Activated T-helper 2 cell treated with anti-CD3 and anti-CD28 coated beads, Interferon-gamma antibody, Interleukin-2, Interleukin-4, amounts not matched to agents 10 μg/mL and 5 μg/mL and 100 μg/mL, durations not matched to agents 14 hours and 24 hours and 36 hours (primary cell): ENCODE measurements at regions of chr14 and their contacts with region 1.

Region 1: DNA sequence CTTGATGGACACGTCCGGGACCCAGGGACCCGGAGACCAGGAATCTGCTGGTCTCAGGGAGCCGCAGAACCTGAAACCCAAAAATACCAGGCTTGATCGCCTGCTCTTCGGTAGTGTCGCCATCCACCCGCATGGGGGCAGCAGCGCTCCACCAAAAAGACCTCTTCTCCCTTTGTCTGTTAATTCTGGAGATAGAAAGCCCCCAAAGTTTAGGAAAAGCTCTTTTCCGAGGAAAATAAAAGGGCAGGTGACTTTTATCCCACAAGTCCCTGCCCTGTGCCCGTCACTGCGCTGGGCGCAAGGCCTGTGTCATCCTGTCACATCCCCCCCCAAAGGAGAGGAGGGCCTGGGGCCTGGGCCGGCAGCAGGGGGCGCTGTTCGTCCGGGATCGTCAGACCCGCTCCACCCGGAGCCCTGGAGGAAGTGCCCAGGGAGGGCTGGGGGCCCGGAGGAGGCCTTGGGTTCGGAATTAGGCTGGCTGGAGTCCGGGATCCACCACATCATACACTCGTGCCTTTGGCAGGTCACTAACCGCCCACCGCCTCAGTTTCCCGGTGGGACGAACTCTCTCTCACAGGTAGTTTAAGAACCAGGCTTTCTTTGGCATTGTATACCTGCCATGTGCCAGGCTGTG is 31.9 kb downstream of the DAD1 start:
- DNase-seq: peak; percentile 87
- H3K4me3 Mint-ChIP-seq: peak overlapping the region; percentile 81
- H3K27ac Mint-ChIP-seq: peak overlapping the region; percentile 98
- H3K4me1 Mint-ChIP-seq: peaks cover 88% of the 10 kb centered on the region
- H3K27me3 Mint-ChIP-seq: peaks cover 3% of the 10 kb centered on the region

Region 2: DNA sequence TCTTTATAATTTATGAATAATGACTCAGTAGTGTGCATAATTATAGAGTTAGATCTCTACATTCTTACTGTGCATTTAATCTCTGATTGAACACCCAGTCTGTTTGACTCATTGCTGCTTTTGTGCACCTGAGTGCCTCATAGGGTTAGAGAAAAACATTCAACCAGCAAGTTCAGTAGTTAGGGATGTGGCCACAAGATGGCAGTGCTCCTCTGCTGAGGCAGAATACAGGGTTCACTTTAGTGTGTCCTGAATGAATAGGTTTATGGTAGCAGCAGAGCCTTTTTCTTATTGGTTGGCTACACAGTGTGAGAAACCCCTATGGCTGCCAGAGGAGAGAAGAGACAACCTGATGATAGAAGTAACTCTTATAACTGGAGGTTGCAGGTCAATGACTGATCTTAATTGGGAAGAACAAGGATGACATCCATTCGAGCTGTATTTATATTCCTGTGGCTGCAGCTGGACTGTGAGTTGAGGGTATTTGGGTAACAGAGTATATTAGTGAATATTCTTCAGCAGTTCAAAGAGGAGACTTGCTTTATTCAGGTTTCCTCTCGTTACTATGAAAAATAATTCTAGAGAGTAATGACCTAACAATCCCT is 688.6 kb before region 1 on chr14:
- intact Hi-C with region 1: loop called (anchors 5 kb)
- DNase-seq: peak; percentile 67
- H3K4me3 Mint-ChIP-seq: peak overlapping the region; percentile 65
- H3K27ac Mint-ChIP-seq: no peak overlapping the region
- H3K4me1 Mint-ChIP-seq: peaks cover 32% of the 10 kb centered on the region
- H3K27me3 Mint-ChIP-seq: peaks cover 2% of the 10 kb centered on the region

Region 3: DNA sequence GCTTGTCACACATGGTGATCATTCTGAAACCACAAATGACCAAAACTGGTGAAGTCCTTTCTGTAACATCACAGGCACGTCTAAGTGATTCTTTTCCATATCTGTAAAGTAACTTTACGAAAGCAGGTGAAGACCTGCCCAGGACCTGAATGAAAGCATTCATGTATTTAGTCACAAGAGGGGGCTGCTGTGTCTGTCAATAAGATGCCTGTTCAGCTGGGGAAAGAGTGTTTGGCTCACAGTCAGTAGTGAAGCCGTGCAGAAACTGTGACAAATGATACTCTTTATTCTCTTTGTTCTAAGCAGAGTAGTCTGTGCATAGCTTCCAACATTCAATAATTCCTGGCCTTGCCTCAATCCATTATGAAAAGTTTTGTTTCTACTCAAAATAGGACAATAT is 510.0 kb before region 1 on chr14:
- intact Hi-C with region 1: loop called (anchors 5 kb)
- DNase-seq: peak; percentile 14
- H3K4me3 Mint-ChIP-seq: peak overlapping the region; percentile 57
- H3K27ac Mint-ChIP-seq: peak overlapping the region; percentile 83
- H3K4me1 Mint-ChIP-seq: peaks cover 26% of the 10 kb centered on the region
- H3K27me3 Mint-ChIP-seq: no peaks in the 10 kb centered on the region

Region 4: DNA sequence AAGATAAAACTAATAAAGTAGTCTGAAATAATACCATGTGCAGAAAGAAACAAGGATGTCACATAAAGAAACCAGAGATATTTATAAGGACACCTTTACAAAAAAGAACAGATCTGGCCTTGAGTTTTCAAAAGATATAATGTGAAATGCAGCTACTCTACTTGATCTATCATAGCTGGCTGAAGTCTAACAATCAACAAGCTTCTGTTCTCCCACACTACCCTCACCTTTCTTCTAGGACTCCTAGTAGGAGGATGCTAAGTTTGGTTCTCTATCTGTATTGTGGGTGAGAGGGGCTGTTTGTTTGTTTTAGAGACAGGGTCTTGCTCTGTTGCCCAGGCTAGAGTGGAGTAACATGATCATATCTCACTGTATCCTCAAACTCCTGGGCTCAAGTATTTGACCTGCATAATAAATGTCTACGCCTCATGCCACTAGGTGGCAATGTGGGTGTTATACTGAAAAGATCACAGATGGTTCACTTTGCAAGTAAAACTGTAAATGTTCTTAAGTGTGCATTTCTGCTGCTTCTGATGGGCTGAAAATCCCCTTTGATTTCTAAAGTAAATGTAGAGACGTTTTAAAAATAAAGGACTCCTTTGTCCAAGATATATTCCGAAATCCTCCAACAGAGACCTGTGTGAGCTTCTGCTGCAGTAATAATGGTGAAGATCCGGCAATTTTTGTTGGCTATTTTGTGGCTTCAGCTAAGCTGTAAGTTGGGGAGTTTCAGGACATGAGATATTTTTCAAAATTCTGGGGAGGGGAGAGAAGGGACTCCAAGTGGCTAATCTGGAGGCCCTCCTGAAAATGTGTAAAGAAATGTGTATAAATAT is 237.4 kb before region 1 on chr14:
- intact Hi-C with region 1: loop called (anchors 5 kb)
- DNase-seq: no peak
- H3K4me3 Mint-ChIP-seq: peak overlapping the region; percentile 67
- H3K27ac Mint-ChIP-seq: peak overlapping the region; percentile 52
- H3K4me1 Mint-ChIP-seq: no peaks in the 10 kb centered on the region
- H3K27me3 Mint-ChIP-seq: no peaks in the 10 kb centered on the region

Region 5: DNA sequence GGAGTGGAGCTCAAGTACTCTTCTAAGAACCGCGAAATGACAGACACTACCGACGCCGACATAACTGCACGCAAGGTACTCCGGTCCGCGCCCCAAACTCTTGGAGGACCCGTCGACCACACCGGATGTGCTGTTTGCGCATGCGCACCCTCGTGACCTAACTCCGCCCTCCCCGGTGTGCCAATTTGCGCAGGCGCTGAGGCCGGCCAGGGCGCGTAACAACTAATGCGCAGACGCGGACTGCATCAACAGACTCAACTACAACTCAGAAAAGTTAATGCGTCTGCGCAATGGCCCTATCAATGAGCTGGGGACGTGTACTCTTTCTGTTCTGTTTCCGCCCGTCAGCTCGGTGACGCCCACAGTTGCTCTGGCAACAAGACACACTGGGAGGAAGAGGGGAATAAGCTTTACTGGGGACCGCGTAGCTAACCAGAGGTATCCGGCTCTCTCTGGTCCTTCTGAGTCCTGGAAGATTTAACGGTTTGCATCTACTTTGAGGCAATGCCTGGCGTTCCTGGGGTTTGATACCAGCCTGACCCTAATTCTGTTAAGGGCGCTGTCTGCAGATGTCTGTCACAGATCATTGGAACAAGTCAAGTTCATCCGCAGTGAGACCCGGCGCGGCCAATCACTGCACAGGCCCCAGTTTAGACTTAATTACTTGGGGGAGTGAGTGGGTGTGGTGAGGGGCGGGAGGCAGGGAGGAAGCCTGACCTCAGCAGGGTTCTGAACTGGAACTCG is 32.2 kb after region 1 on chr14 and contains the start of gene DAD1:
- intact Hi-C with region 1: loop called (anchors 1 kb)
- DNase-seq: peak; percentile 100
- H3K4me3 Mint-ChIP-seq: peak within 1 kb of the TSS; percentile 88
- H3K27ac Mint-ChIP-seq: peak within 1 kb of the TSS; percentile 95
- H3K4me1 Mint-ChIP-seq: peaks cover 51% of the 10 kb centered on the region
- H3K27me3 Mint-ChIP-seq: peaks cover 10% of the 10 kb centered on the region
- total RNA-seq, gene DAD1: 246 and 256 TPM in 2 replicates

Region 6: DNA sequence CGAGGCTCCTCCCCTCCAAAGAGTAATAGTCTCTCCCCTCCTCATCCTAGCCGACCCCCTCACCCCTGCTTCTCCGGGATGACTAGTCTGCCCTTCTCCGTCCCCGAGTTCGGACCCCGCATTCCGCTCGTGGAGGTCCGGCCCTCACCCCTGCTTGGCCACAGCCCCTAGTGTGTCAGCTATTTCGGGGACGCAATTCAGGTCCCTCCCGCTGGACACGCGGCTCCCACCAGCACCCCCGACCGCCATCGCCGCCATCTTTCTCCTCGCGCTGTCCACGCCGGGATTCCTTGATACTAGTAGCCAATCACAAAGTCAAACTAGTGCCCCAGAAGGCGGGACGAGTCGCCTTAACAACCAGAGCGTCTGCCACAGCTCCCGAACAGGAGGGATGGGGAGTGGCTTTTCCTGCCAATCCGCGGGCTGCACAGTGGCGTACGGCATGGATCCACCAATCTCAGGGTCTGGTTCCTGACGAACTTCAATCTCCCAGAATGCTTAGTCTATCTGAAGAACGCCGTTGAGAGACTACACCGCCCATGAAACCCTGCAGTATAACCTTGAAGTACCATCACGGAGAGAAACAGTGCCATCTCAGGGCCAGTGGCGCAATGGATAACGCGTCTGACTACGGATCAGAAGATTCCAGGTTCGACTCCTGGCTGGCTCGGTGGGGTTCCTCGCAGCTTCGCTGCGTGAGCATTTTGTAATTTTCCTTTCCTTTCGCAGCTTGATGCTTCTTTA is 372.2 kb after region 1 on chr14 and contains the start of gene PRMT5:
- intact Hi-C with region 1: loop called (anchors 5 kb)
- DNase-seq: peak; percentile 96
- H3K4me3 Mint-ChIP-seq: no peak within 1 kb of the TSS
- H3K27ac Mint-ChIP-seq: no peak within 1 kb of the TSS
- H3K4me1 Mint-ChIP-seq: peaks cover 27% of the 10 kb centered on the region
- H3K27me3 Mint-ChIP-seq: no peaks in the 10 kb centered on the region
- total RNA-seq, gene PRMT5: 147 and 152 TPM in 2 replicates